Activated CD4-positive, alpha-beta memory T cell treated with anti-CD3 and anti-CD28 coated beads, Interleukin-2, amount 10 ng/mL, durations not matched to agents 7 days and 5 days (primary cell): ENCODE measurements at regions of chr19 and their contacts with region 1.

Region 1: DNA sequence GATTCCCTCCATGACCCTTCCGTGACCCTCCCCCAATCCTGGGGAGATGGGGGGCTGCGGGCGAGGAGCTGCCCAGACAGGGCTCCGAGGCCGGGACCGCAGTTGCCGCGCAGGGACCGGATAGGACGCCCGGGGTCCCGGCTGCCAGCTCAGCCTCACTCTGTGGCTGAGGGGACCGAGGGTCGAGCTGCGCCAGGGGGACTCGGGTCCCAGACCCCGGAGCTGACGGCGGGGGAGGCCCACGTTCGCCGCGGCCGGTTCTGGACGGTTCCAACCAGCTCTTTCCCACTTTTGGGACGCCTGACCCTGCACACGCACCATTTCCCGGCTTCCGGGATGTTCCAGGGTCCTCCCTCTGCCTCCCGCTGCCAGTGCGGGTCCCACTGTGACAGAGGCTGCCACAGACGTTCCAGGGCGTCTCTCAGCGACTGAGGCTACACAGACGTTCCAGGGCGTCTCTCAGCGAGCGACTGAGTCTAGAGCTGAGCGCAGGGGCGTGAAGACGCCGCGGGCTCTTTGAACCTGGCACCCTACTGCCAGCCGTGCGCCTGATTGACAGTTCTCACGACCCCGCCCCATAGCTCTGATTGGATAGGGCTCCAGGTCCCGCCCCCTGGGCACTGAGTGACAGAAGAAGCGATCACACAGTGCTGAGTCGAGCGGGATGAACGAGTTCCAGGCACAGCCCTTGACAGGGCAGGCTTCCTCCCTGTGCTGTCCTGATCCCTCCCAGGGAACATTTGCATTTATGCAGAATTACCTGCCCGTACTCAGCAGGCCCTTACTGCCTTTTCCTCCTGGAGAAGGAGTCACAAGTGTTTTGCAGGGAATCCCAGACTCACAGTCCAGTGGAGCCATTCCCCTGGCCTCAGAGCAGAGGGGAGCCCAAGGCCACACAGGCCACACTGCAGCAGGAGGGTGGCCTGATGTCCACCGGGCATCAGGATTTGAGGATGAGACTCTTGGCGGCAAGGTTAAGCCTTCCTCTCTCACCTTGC is at the start of gene ZNF563:
- DNase-seq: peak; percentile 98
- H3K4me3 Mint-ChIP-seq: peak within 1 kb of the TSS; percentile 82
- H3K27ac Mint-ChIP-seq: peak within 1 kb of the TSS; percentile 97
- H3K4me1 Mint-ChIP-seq: peaks cover 31% of the 10 kb centered on the region
- H3K27me3 Mint-ChIP-seq: no peaks in the 10 kb centered on the region
- total RNA-seq, gene ZNF563: 4.0 to 4.5 TPM

Region 2: DNA sequence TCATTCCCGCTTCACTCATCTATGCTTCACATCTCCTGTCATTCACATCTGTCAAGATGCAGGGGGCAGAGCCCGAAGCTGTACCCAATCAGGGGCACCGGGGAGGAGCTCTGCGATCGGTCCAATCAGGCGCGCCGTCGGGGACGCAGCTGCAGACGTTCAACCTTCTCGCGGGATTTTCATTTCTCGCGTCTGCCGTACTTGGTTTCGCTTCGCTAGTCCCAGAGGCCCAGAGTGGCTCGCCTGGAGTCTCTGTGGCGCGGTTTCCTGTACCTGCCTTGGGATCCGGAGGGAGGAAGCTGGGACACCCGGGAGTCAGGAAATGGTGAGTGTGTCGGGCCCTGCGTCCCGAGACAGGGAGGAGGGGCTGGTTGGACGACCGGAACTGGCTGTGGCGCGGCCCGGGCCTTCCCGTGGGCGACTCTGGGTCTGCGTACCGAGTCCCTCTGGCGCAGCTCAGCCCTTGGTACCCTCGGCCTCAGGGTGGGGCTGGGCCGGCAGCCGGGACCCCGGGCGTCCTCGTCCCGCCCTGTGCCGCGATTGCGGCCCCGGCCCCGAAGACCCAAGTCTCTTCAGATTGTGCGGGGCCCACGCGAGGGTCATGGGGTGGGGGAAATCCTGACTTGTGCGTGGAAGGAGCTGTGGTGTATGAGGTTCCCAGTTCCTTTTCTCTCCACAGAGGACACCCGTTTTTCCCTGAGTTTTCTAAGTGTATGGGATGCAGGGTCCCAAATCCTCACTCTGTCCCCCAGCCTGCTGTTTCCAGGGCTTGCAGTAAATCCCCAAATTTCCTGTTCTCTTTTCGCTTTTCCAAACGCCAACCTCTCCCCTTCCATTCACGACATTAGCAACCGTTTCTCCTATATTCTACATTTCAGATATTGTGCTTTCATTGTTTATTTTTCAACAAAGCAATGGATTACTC is 170.3 kb before region 1 on chr19 and contains the start of gene ZNF136:
- CTCF ChIA-PET with region 1: interaction called, 3 read pairs
- POLR2A ChIA-PET with region 1: interaction called, 15 read pairs
- DNase-seq: peak; percentile 96
- H3K4me3 Mint-ChIP-seq: peak within 1 kb of the TSS; percentile 90
- H3K27ac Mint-ChIP-seq: peak within 1 kb of the TSS; percentile 90
- H3K4me1 Mint-ChIP-seq: peaks cover 33% of the 10 kb centered on the region
- H3K27me3 Mint-ChIP-seq: no peaks in the 10 kb centered on the region
- total RNA-seq, gene ZNF136: 11.0 TPM

Region 3: GRCh38 chr19:12275744-12276143 is 57.7 kb before region 1 on chr19:
- CTCF ChIA-PET with region 1: no interaction called
- POLR2A ChIA-PET with region 1: no interaction called
- DNase-seq: no peak
- H3K4me3 Mint-ChIP-seq: no peak overlapping the region
- H3K27ac Mint-ChIP-seq: no peak overlapping the region
- H3K4me1 Mint-ChIP-seq: no peaks in the 10 kb centered on the region
- H3K27me3 Mint-ChIP-seq: no peaks in the 10 kb centered on the region

Region 4: DNA sequence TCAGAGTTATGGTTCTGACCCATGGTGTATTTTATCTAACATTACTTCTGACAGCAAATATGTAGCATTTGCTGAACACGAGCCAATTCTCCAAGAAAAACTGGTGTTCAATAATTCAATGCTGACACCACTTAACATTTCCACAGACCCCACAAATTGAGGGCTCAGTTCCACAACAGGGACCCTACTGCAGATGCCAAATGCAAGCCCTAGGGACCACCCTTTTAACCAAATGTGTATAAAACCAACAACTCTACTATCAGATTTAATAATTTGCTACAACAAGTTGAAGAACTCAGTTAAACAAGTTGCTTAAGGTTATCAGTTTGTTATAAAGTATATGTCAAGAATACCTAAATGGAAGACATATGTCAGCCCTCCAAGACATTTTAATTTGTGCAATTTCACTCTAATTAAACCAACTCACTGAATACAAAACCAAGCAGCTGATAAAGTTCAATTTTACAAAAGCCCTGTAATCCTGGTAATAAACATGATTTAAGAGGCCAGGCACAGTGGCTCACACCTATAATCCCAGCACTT is 45.4 kb before region 1 on chr19:
- CTCF ChIA-PET with region 1: no interaction called
- POLR2A ChIA-PET with region 1: interaction called, 30 read pairs
- DNase-seq: no peak
- H3K4me3 Mint-ChIP-seq: no peak overlapping the region
- H3K27ac Mint-ChIP-seq: peak overlapping the region; percentile 44
- H3K4me1 Mint-ChIP-seq: peaks cover 35% of the 10 kb centered on the region
- H3K27me3 Mint-ChIP-seq: no peaks in the 10 kb centered on the region

Region 5: GRCh38 chr19:12294249-12295158 is 39.0 kb before region 1 on chr19 and contains the start of gene ZNF44:
- CTCF ChIA-PET with region 1: interaction called, 9 read pairs
- POLR2A ChIA-PET with region 1: interaction called, 30 read pairs
- DNase-seq: peak; percentile 98
- H3K4me3 Mint-ChIP-seq: peak within 1 kb of the TSS; percentile 98
- H3K27ac Mint-ChIP-seq: peak within 1 kb of the TSS; percentile 100
- H3K4me1 Mint-ChIP-seq: peaks cover 37% of the 10 kb centered on the region
- H3K27me3 Mint-ChIP-seq: no peaks in the 10 kb centered on the region
- total RNA-seq, gene ZNF44: 14.9 to 16.2 TPM